ENCODE measurements at regions of chr5 and their contacts with region 1.

Region 1: DNA sequence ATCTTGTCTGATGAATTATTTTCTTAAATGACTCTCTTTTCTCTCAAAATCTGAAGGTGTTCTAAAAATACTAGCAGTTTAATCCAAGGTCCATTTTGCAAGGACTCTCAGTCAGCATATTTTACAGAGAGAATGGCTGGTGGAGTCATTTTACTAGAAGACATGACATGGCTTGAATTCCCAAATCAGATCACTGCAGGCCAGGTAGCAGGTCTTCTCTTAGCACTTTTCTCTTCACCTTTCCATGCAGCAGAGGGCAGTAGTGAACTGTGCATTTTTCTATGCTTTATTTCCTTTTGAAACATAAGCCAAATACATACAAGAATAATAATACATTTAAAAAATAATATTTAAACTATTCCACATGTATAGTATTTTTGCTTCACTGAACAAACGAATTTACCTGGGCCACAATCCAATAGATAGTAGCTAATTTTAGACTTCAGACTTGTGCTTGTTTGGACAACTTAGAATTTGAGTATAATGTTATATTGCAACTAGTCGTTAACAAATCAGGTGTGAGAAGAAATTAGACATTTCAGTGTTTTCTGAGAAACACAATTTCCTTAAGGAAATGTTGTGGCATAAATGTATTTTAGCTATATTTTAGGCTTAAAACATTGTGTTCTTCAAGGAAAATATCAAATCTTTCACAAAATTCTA is 289.4 kb upstream of the DAB2 start:
- DNase-seq: no peak
- ATAC-seq: peak in 3 of 4 donors; percentile 69 to 83 (median 74)
- H3K4me3 ChIP-seq: no peak overlapping the region
- H3K27ac ChIP-seq: peak overlapping the region; percentile 65
- H3K4me1 ChIP-seq: peaks cover 9% of the 10 kb centered on the region
- H3K27me3 ChIP-seq: no peaks in the 10 kb centered on the region
- CTCF ChIP-seq: peak; percentile 68

Region 2: DNA sequence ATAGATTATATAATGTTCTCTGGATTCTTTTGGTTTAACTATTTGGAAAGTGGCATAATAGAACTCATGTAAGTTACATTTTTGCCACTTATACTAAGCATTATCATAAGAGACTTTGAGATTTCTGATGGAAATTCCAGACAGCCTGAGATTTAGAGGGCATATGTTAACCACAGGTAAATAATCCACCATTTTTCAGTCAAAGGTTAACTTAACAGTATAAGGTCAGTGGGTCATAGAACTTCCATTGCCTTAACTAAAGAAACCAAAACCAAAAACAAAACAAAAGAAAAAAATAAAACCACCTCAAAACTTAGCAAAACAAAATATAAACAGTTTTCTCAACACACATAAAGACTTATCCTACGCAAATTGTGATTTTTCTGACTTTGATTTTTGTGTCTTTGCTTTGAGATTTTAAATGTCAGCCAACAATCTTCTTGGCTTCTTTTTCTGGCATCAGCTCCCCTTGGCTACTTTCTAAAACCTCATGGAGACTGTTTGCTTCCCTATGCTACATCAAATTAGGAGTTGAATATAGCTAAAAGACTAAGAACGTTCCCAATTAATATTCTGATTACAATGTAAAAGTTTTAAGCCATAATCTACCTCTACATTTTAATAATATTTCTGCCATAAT is 140.7 kb after region 1 on chr5:
- intact Hi-C with region 1: no loop called
- DNase-seq: no peak
- ATAC-seq: no peak
- H3K4me3 ChIP-seq: no peak overlapping the region
- H3K27ac ChIP-seq: no peak overlapping the region
- H3K4me1 ChIP-seq: no peaks in the 10 kb centered on the region
- H3K27me3 ChIP-seq: no peaks in the 10 kb centered on the region
- CTCF ChIP-seq: no peak

Region 3: GRCh38 chr5:40694433-40694832 is 980.3 kb after region 1 on chr5:
- intact Hi-C with region 1: loop called (anchors 5 to 10 kb)
- DNase-seq: no peak
- ATAC-seq: no peak
- H3K4me3 ChIP-seq: no peak overlapping the region
- H3K27ac ChIP-seq: no peak overlapping the region
- H3K4me1 ChIP-seq: peaks cover 12% of the 10 kb centered on the region
- H3K27me3 ChIP-seq: no peaks in the 10 kb centered on the region
- CTCF ChIP-seq: no peak